ENCODE measurements at regions of chr4 and their contacts with region 1.

Region 1: DNA sequence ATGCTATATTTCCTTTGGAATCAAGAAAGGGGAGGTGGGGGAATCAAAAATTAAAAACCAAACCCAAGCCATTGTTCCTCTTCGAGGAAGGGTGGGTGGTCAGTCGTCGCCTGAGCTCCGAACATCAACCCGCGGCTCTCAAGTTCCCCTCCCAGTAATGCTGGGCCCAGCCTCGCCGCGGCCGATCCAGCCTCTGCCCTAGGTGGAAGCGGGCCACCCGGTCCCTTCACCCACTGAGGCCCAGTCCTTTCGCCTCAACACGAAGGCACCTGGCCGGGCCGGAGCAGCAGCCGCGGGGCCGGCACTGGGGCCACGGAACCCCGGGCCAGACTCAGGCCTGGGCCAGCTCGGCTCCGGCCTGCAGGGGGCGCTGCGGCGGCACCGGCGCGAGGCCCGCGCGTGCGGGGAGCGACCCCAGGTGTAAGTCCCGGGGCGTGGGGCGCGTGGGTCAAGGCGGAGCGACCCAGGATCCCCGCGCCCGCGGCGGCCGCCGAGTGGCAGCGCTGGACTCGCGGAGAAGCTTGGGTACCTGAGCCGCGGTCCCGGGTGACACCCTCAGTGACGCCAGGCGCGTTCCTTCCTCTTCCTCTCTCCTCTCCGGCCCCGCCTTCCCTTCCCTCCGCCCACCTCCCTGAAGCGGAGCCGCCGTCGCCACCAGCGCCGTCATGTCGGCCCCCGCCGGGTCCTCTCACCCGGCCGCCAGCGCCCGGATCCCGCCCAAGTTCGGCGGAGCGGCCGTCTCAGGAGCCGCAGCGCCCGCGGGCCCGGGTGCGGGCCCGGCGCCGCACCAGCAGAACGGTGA is at the start of gene SEC24B:
- DNase-seq: peak; percentile 43
- ATAC-seq: peak; percentile 91
- H3K4me3 ChIP-seq: peak within 1 kb of the TSS; percentile 82
- H3K27ac ChIP-seq: peak within 1 kb of the TSS; percentile 80
- H3K4me1 ChIP-seq: peaks cover 8% of the 10 kb centered on the region; the same call in 1 of the 2 replicates
- H3K27me3 ChIP-seq: no peaks in the 10 kb centered on the region
- CTCF ChIP-seq: peak; percentile 64 to 89 (median 74); a peak in 5 of 6 replicates
- EP300 ChIP-seq: no peak
- POLR2A ChIP-seq: peak; percentile 86
- RAD21 ChIP-seq: peak; percentile 67
- polyA plus RNA-seq, gene SEC24B: 6.4 to 8.1 TPM

Region 2: GRCh38 chr4:109275086-109275745 is 158.2 kb before region 1 on chr4:
- CTCF ChIA-PET with region 1: no interaction called
- POLR2A ChIA-PET with region 1: no interaction called
- RAD21 ChIA-PET with region 1: no interaction called
- SMC1A ChIA-PET with region 1: no interaction called
- in situ Hi-C with region 1: no loop called
- intact Hi-C with region 1: no loop called
- DNase-seq: no peak
- ATAC-seq: no peak
- H3K4me3 ChIP-seq: no peak overlapping the region
- H3K27ac ChIP-seq: no peak overlapping the region
- H3K4me1 ChIP-seq: no peaks in the 10 kb centered on the region; the same call in 1 of the 2 replicates
- H3K27me3 ChIP-seq: no peaks in the 10 kb centered on the region
- CTCF ChIP-seq: no peak
- EP300 ChIP-seq: no peak
- POLR2A ChIP-seq: no peak
- RAD21 ChIP-seq: no peak

Region 3: GRCh38 chr4:109559983-109560686 is 126.7 kb after region 1 on chr4 and contains the start of gene MCUB:
- CTCF ChIA-PET with region 1: interaction called, 7 read pairs
- POLR2A ChIA-PET with region 1: interaction called, 8 read pairs
- RAD21 ChIA-PET with region 1: interaction called, 8 read pairs
- SMC1A ChIA-PET with region 1: interaction called, 4 read pairs
- in situ Hi-C with region 1: no loop called
- intact Hi-C with region 1: loop called (anchors 2 kb)
- DNase-seq: peak; percentile 49
- ATAC-seq: peak; percentile 95
- H3K4me3 ChIP-seq: peak within 1 kb of the TSS; percentile 85
- H3K27ac ChIP-seq: peak within 1 kb of the TSS; percentile 87
- H3K4me1 ChIP-seq: peaks cover 3% of the 10 kb centered on the region; the same call in 1 of the 2 replicates
- H3K27me3 ChIP-seq: no peaks in the 10 kb centered on the region
- CTCF ChIP-seq: no peak
- EP300 ChIP-seq: no peak
- POLR2A ChIP-seq: peak; percentile 87
- RAD21 ChIP-seq: peak; percentile 26; the same call in 1 of the 2 replicates
- polyA plus RNA-seq, gene MCUB: 4.7 to 10.7 TPM

Region 4: GRCh38 chr4:109702950-109703663 is 269.7 kb after region 1 on chr4 and contains the start of gene CASP6:
- CTCF ChIA-PET with region 1: interaction called, 5 read pairs
- POLR2A ChIA-PET with region 1: interaction called, 12 read pairs
- RAD21 ChIA-PET with region 1: interaction called, 10 read pairs
- SMC1A ChIA-PET with region 1: interaction called, 3 read pairs
- in situ Hi-C with region 1: no loop called
- intact Hi-C with region 1: loop called (anchors 2 kb)
- DNase-seq: peak; percentile 41
- ATAC-seq: peak; percentile 90
- H3K4me3 ChIP-seq: peak within 1 kb of the TSS; percentile 96
- H3K27ac ChIP-seq: peak within 1 kb of the TSS; percentile 71
- H3K4me1 ChIP-seq: peaks cover 15% of the 10 kb centered on the region
- H3K27me3 ChIP-seq: no peaks in the 10 kb centered on the region
- CTCF ChIP-seq: peak; percentile 59 to 79 (median 70)
- EP300 ChIP-seq: 0 out of 4 replicates have a peak, but pooled peaks have one; percentile 6 to 15
- POLR2A ChIP-seq: peak; percentile 73
- RAD21 ChIP-seq: peak; percentile 57
- polyA plus RNA-seq, gene CASP6: 20.0 to 23.2 TPM

Region 5: GRCh38 chr4:109815151-109816081 is 382.0 kb after region 1 on chr4 and contains the start of gene GAR1:
- CTCF ChIA-PET with region 1: interaction called, 8 read pairs
- POLR2A ChIA-PET with region 1: interaction called, 3 read pairs
- RAD21 ChIA-PET with region 1: interaction called, 5 read pairs
- SMC1A ChIA-PET with region 1: interaction called, 3 read pairs
- in situ Hi-C with region 1: loop called (anchors 5 kb)
- intact Hi-C with region 1: loop called (anchors 1 kb)
- DNase-seq: peak; percentile 72
- ATAC-seq: peak; percentile 94
- H3K4me3 ChIP-seq: peak within 1 kb of the TSS; percentile 96
- H3K27ac ChIP-seq: peak within 1 kb of the TSS; percentile 91
- H3K4me1 ChIP-seq: no peaks in the 10 kb centered on the region
- H3K27me3 ChIP-seq: no peaks in the 10 kb centered on the region
- CTCF ChIP-seq: 0 out of 6 replicates have a peak, but pooled peaks of 1 of the 3 experiments have one; percentile 2
- EP300 ChIP-seq: peak in 1 of 2 experiments; percentile 19; a peak in 1 of 4 replicates
- POLR2A ChIP-seq: peak; percentile 81; the same call in 1 of the 2 replicates
- RAD21 ChIP-seq: no peak
- polyA plus RNA-seq, gene GAR1: 16.6 to 20.5 TPM

Region 6: GRCh38 chr4:109977854-109978501 is 544.6 kb after region 1 on chr4:
- CTCF ChIA-PET with region 1: interaction called, 19 read pairs
- POLR2A ChIA-PET with region 1: no interaction called
- RAD21 ChIA-PET with region 1: no interaction called
- SMC1A ChIA-PET with region 1: interaction called, 6 read pairs
- in situ Hi-C with region 1: loop called (anchors 5 kb)
- intact Hi-C with region 1: no loop called
- DNase-seq: no peak
- ATAC-seq: peak; percentile 64
- H3K4me3 ChIP-seq: no peak overlapping the region
- H3K27ac ChIP-seq: no peak overlapping the region
- H3K4me1 ChIP-seq: no peaks in the 10 kb centered on the region
- H3K27me3 ChIP-seq: peaks cover 0 to 2% of the 10 kb centered on the region in 2 experiments; a peak in 3 of 4 replicates
- CTCF ChIP-seq: peak; percentile 20 to 48 (median 28); a peak in 4 of 6 replicates
- EP300 ChIP-seq: no peak
- POLR2A ChIP-seq: no peak
- RAD21 ChIP-seq: peak; percentile 58

Measured in GM12878 (cell line).